Dorsolateral prefrontal cortex (tissue), 120 donors: ENCODE measurements at regions of chrX and their contacts with region 1.

Region 1: GRCh38 chrX:148902581-148902980 is 402.2 kb downstream of the AFF2 start:
- DNase-seq: peak in 1 of 10 donors; percentile 7
- H3K4me3 ChIP-seq: no peak overlapping the region
- H3K27ac ChIP-seq: no peak overlapping the region
- H3K27me3 ChIP-seq: peaks cover 0 to 59% (median 15%) of the 10 kb centered on the region in 45 donors
- CTCF ChIP-seq: no peak

Region 2: GRCh38 chrX:148768307-148768706 is 134.3 kb before region 1 on chrX:
- intact Hi-C with region 1: loop called in 1 of 2 experiments (anchors 5 kb)
- DNase-seq: no peak
- H3K4me3 ChIP-seq: no peak overlapping the region
- H3K27ac ChIP-seq: no peak overlapping the region
- H3K27me3 ChIP-seq: peaks cover 0 to 43% (median 9%) of the 10 kb centered on the region in 45 donors
- CTCF ChIP-seq: no peak

Region 3: GRCh38 chrX:148784856-148785255 is 117.7 kb before region 1 on chrX:
- intact Hi-C with region 1: no loop called
- DNase-seq: no peak
- H3K4me3 ChIP-seq: peak overlapping the region in 31 of 59 donors; percentile 3 to 56 (median 27)
- H3K27ac ChIP-seq: no peak overlapping the region
- H3K27me3 ChIP-seq: peaks cover 0 to 51% (median 10%) of the 10 kb centered on the region in 45 donors
- CTCF ChIP-seq: no peak